AG04449 (cell line): ENCODE measurements at regions of chr11 and their contacts with region 1.

Region 1: DNA sequence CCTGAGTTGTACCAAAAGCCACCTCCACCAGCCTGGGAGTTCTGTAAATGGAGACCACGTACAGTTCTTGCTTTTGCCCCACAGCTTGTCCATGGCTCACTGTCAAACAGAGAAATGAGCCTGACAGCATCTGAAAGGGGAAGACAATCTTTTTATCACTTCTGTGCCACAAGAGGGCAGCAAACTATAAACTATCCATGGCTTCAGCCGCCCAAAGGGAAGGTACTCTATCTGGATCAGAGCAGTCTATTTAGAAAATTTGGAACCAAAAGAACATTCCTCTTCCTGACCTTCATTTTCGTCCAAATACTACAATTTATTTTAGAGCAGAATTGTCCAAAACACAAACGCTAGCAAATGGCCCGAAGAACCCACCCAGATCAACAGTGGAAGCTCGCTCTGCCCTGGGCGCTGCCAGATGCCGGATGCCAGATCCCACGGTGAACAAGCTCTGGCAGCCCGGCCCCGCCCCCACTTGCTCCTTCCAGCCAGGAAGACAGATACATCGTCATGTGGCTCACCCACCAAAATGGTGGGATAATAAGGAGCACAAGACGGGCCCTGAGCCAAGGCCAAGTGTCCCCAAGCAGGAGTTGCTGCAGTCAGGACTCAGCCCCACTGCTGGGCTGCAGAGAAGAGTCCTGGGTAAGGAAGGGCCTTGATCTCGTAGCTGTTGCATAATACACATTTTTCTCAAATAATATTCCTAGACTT is 23.9 kb upstream of the SCGB1A1 start:
- DNase-seq: peak; percentile 31
- H3K4me3 ChIP-seq: peak overlapping the region; percentile 29
- CTCF ChIP-seq: peak; percentile 49

Region 2: GRCh38 chr11:62324738-62325556 is 70.0 kb before region 1 on chr11:
- CTCF ChIA-PET with region 1: no interaction called
- POLR2A ChIA-PET with region 1: no interaction called
- DNase-seq: no peak
- H3K4me3 ChIP-seq: no peak overlapping the region
- CTCF ChIP-seq: peak; percentile 53

Region 3: GRCh38 chr11:62419314-62419929 is 24.4 kb after region 1 on chr11:
- CTCF ChIA-PET with region 1: interaction called, 62 read pairs
- POLR2A ChIA-PET with region 1: interaction called, 3 read pairs
- DNase-seq: no peak
- H3K4me3 ChIP-seq: no peak overlapping the region
- CTCF ChIP-seq: no peak

Region 4: DNA sequence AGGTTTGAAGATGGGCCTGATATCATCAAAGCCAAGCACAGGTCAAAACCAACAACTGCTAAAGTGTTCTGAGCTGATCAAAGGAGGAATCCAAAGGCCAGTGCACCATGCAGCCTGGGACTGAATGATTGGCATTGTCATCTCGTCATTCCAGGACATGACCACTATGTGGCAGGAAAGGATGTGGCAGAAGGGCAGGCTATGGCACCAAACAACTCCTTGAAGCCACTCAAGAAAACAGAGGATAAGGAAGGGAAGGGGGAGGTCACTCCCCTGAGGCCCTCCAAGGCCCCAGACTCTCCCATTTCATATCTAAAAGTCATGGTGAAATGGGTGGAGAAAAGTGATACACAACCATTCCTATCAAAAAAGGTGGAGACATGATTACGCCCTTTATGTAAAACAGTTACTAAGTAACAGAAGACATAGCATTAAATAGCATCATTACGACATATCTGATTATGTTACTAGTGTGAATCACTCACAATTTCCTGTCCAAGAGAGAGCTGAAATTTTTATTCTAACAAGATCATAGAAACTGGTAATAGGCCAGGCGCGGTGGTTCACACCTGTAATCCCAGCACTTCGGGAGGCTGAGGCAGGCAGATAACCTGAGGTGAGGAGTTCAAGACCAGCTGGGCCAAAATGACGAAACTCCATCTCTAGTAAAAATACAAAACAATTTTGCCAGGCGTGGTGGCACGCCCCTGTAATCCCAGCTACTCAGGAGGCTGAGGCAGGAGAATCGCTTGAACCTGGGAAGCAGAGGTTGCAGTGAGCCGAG is 102.3 kb after region 1 on chr11:
- CTCF ChIA-PET with region 1: interaction called, 10 read pairs
- POLR2A ChIA-PET with region 1: no interaction called
- DNase-seq: no peak
- H3K4me3 ChIP-seq: no peak overlapping the region
- CTCF ChIP-seq: peak; percentile 23

Region 5: GRCh38 chr11:62542750-62543567 is 148.0 kb after region 1 on chr11:
- CTCF ChIA-PET with region 1: interaction called, 187 read pairs
- POLR2A ChIA-PET with region 1: interaction called, 17 read pairs
- DNase-seq: peak; percentile 28
- H3K4me3 ChIP-seq: peak overlapping the region; percentile 98
- CTCF ChIP-seq: peak; percentile 98

Region 6: GRCh38 chr11:62567018-62567633 is 172.1 kb after region 1 on chr11:
- CTCF ChIA-PET with region 1: interaction called, 21 read pairs
- POLR2A ChIA-PET with region 1: interaction called, 5 read pairs
- DNase-seq: no peak
- H3K4me3 ChIP-seq: no peak overlapping the region
- CTCF ChIP-seq: no peak

Region 7: GRCh38 chr11:62601394-62602140 is 206.6 kb after region 1 on chr11 and contains the start of gene MTA2:
- CTCF ChIA-PET with region 1: interaction called, 11 read pairs
- POLR2A ChIA-PET with region 1: interaction called, 3 read pairs
- DNase-seq: peak; percentile 89
- H3K4me3 ChIP-seq: peak within 1 kb of the TSS; percentile 82
- CTCF ChIP-seq: no peak

Region 8: DNA sequence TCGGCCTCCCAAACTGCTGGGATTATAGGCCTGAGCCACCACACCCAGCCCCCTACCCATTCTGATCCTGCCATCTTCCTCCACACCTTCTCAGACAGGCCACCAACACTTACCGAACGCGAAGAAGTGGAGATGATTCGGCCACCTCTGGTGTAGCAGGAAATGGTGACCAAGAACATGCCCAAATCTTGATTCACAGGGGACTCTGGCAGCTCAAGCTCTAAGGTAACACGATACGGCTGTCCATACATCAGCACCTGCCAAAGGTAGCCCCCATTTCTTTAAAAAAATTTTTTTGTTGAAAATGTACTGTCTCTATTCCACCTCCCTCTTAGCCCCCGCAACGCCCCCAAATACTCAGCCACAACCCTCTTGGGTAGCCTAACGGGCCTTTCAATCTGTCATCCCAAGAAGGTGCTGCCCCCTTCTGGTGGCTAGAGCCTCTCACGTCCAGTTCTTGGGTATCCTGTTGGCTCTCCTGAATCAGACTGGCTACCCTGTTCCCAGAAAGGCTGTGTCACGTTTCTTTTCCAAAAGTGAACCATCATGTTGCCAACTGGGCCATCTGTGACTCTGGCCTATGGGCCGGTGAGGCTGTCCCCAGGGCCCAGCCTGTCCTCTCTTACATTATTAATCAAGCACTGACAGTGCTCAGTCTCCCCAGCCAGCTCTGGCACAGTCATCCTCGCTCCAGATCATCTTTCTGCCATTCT is 299.6 kb after region 1 on chr11:
- CTCF ChIA-PET with region 1: interaction called, 44 read pairs
- POLR2A ChIA-PET with region 1: no interaction called
- DNase-seq: no peak
- H3K4me3 ChIP-seq: no peak overlapping the region
- CTCF ChIP-seq: peak; percentile 84